Activated CD4-positive, alpha-beta T cell treated with anti-CD3 and anti-CD28 coated beads for 36 hours (primary cell): ENCODE measurements at regions of chr3 and their contacts with region 1.

Region 1: GRCh38 chr3:38496131-38496910 is at the start of gene EXOG:
- DNase-seq: peak; percentile 98
- ATAC-seq: peak; percentile 88
- H3K4me3 Mint-ChIP-seq: peak within 1 kb of the TSS; percentile 86
- H3K27ac Mint-ChIP-seq: peak within 1 kb of the TSS; percentile 92
- H3K4me1 Mint-ChIP-seq: peaks cover 18% of the 10 kb centered on the region
- H3K27me3 Mint-ChIP-seq: no peaks in the 10 kb centered on the region
- total RNA-seq, gene EXOG: 13.0 to 14.9 TPM

Region 2: DNA sequence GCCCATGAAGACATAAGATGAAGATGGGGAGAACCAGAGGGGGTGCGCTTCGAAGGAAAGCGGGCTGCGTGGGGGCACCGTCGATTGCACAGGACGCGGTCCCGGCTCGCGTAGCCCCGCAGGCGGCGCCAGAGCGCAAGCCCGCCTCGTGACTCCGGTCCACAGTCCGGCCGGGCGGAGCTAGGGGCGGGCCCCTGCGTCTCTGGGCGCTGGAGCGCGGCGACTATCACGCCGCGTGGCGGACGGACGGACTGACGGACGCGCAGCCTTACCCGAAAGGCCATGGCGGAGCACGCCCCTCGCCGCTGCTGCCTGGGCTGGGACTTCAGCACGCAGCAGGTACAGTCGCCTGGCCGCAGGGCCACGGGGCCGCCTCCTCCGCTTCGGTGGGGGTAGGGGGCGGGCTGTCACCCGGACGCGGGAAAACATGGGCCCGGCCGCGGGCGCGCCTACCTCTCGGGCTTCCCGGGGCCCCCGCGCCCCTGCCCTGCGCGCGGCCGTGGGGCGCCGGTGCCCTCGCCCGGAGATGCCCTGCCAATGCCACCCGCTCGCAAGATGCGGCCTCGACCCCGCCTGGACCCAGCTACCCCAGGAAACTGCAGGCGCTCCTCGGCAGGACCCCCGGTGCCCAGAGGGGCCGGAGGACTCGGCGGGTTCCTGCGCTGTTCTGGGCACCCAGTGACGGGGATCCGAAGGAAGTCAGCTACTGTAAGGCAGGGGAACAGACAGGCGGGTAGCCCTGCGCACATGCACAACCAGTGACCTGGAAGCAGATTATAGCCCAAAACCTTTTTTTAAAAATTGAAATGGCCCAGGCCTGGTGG is 149.5 kb before region 1 on chr3 and contains the start of gene XYLB:
- CTCF ChIA-PET with region 1: interaction called, 12 read pairs
- POLR2A ChIA-PET with region 1: no interaction called
- intact Hi-C with region 1: loop called in 1 of 2 experiments (anchors 1 kb)
- DNase-seq: peak; percentile 89
- ATAC-seq: peak; percentile 98
- H3K4me3 Mint-ChIP-seq: peak within 1 kb of the TSS; percentile 70
- H3K27ac Mint-ChIP-seq: no peak within 1 kb of the TSS
- H3K4me1 Mint-ChIP-seq: peaks cover 2% of the 10 kb centered on the region
- H3K27me3 Mint-ChIP-seq: peaks cover 2% of the 10 kb centered on the region
- total RNA-seq, gene XYLB: 5.0 to 5.3 TPM

Region 3: DNA sequence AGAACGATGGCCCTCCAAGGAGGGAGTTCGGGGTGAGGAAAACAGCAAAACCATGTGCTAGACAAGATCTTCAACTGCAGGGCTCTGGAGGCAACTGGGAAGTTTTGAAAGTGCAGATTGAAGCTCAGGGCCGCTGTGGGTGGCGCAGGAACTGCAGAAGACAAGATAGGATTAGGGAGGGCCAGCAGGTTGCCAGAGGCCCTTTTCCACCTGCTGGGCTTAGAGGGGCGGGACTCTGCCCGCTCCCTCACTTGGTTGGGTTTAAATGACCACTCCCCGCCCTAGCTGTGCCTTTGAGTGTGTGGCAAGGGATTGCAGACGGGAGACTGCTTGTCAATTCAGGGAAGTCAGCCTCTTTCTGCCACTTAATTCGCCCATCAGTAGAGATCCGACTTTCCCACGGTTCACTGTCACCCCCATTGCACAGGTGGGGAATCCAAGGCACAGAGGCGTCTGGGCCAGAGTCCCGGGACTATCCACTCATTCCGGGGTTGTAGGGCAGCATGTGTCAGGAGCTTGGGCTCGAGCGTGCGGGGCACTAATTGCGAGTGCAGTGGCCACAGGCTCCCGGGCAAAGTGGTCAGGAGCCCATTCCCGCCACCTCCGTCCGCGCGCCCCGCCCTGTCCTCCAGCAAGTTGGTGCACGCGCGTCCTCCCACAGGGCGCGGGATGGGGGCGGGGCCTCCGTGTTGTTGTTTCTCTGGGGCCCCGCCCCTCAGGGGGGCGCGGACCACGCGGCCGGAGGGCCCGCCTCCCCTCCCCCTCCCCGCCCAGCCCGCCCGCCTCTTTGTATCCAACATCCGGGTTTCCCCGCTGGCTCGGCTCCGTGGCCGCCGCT is 43.0 kb before region 1 on chr3 and contains the start of gene ACVR2B:
- CTCF ChIA-PET with region 1: interaction called, 5 read pairs
- POLR2A ChIA-PET with region 1: no interaction called
- intact Hi-C with region 1: loop called (anchors 1 kb)
- DNase-seq: peak; percentile 85
- ATAC-seq: peak; percentile 71
- H3K4me3 Mint-ChIP-seq: peak within 1 kb of the TSS; percentile 87
- H3K27ac Mint-ChIP-seq: peak within 1 kb of the TSS; percentile 81
- H3K4me1 Mint-ChIP-seq: peaks cover 9% of the 10 kb centered on the region
- H3K27me3 Mint-ChIP-seq: peaks cover 2% of the 10 kb centered on the region
- total RNA-seq, gene ACVR2B: 5.7 to 6.9 TPM

Region 4: DNA sequence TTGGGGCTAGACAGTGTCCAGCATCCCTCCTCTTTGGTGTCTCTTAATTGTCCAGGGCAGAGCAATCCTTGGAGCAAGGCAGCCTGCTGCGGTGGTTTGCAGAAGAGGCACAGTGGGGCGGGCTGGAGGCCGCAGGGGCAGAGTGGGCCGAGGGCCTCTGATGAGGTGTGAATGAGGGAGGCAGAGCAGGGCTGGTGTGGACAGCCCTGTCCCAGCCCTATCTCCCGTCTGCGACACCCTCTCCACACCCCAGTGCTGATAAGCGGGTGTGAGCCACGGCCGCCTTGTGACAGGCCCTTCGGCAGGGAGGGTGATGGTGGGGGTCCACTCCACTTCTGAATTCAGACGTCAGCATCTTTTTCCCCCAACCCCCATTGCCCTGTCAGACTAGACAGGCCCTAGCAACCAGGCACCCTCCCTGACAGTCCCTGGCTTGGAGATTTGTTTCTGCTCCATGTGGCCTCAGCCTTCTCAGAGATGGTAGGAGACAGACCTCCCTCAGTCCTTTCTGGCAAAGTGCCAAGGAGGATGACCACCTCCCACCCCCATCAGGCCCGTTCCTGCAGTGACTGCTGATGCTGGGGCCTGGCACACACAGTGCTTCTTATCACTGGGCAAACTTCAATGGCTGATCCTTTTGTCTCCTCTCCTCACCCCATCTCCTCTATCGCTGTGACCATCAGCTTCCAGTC is 37.1 kb after region 1 on chr3:
- CTCF ChIA-PET with region 1: no interaction called
- POLR2A ChIA-PET with region 1: no interaction called
- intact Hi-C with region 1: no loop called
- DNase-seq: no peak
- ATAC-seq: no peak
- H3K4me3 Mint-ChIP-seq: no peak overlapping the region
- H3K27ac Mint-ChIP-seq: no peak overlapping the region
- H3K4me1 Mint-ChIP-seq: peaks cover 4% of the 10 kb centered on the region
- H3K27me3 Mint-ChIP-seq: no peaks in the 10 kb centered on the region

Region 5: DNA sequence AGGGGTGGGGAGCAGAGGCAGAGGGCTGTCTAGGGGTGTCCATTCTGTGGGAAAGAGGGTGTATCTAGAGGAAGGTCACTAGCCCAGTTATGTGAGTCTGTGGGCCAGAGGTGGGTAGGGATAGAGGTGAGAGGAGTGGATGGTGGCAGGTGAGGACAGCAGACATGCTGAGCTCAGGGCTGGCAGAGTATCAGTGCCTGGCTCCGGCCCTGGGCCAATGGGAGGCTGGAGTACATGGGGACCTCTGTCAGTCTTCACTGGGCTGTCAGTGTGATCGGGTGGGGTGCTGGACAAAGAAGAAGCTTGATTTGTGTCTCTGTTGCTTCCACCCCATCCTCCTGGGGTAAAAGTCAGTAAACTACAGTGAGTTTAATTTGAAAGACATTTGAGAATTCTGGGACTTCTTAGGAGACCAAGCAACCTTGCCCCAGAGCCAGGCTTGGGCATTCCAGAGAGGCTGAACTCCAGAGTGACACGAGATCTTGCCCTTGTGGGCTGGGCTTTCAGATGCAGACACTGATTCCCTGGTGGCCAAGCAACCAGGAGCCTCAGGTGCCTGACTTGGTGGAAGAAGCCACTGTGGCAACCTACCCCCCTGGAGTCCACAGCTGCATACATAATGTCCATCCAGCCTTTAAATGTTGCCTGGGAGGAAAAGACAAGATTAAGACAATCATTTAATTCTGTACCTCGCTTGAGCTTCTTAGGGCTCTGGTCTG is 60.5 kb after region 1 on chr3:
- CTCF ChIA-PET with region 1: no interaction called
- POLR2A ChIA-PET with region 1: no interaction called
- intact Hi-C with region 1: no loop called
- DNase-seq: no peak
- ATAC-seq: no peak
- H3K4me3 Mint-ChIP-seq: no peak overlapping the region
- H3K27ac Mint-ChIP-seq: no peak overlapping the region
- H3K4me1 Mint-ChIP-seq: no peaks in the 10 kb centered on the region
- H3K27me3 Mint-ChIP-seq: peaks cover 3% of the 10 kb centered on the region

Region 6: DNA sequence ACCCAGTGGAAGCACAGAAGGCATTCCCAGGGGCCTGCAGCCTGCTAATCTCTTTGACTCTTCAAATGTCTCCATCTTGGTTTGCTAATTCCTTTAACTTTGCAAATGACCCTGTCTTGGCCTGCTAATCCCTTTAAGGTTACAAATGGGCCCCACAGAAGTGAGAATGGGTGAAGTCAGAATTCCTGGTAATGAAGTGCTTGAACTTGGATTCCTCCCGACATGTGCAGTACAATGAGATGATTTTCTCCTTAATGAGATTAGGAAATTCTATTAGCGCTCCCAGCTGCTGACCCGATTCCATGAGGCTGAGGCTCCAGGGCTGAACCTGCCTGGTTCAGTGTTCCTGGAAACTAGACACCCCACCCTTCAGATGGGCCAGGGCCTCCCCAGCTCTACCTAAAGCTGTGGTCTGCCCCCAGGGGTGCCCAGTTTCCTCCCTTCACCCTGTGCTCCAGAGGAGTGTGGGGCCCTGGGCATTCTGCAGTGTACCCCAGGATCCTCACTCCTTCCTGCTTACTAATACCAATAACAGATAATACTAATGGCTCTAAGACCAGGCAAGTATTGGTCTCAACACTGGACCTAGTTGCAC is 105.7 kb after region 1 on chr3:
- CTCF ChIA-PET with region 1: no interaction called
- POLR2A ChIA-PET with region 1: no interaction called
- intact Hi-C with region 1: no loop called
- DNase-seq: no peak
- ATAC-seq: no peak
- H3K4me3 Mint-ChIP-seq: no peak overlapping the region
- H3K27ac Mint-ChIP-seq: no peak overlapping the region
- H3K4me1 Mint-ChIP-seq: no peaks in the 10 kb centered on the region
- H3K27me3 Mint-ChIP-seq: peaks cover 9% of the 10 kb centered on the region

Region 7: GRCh38 chr3:39000008-39000450 is 503.7 kb after region 1 on chr3:
- CTCF ChIA-PET with region 1: interaction called, 4 read pairs
- POLR2A ChIA-PET with region 1: no interaction called
- intact Hi-C with region 1: loop called in 1 of 2 experiments (anchors 5 kb)
- DNase-seq: no peak
- ATAC-seq: peak; percentile 71
- H3K4me3 Mint-ChIP-seq: no peak overlapping the region
- H3K27ac Mint-ChIP-seq: no peak overlapping the region
- H3K4me1 Mint-ChIP-seq: no peaks in the 10 kb centered on the region
- H3K27me3 Mint-ChIP-seq: no peaks in the 10 kb centered on the region

Region 8: GRCh38 chr3:39180546-39181346 is 684.4 kb after region 1 on chr3:
- CTCF ChIA-PET with region 1: no interaction called
- POLR2A ChIA-PET with region 1: no interaction called
- intact Hi-C with region 1: loop called in 1 of 2 experiments (anchors 5 kb)
- DNase-seq: peak; percentile 94
- ATAC-seq: peak; percentile 77
- H3K4me3 Mint-ChIP-seq: peak overlapping the region; percentile 77
- H3K27ac Mint-ChIP-seq: peak overlapping the region; percentile 82
- H3K4me1 Mint-ChIP-seq: peaks cover 48% of the 10 kb centered on the region
- H3K27me3 Mint-ChIP-seq: no peaks in the 10 kb centered on the region

Region 9: DNA sequence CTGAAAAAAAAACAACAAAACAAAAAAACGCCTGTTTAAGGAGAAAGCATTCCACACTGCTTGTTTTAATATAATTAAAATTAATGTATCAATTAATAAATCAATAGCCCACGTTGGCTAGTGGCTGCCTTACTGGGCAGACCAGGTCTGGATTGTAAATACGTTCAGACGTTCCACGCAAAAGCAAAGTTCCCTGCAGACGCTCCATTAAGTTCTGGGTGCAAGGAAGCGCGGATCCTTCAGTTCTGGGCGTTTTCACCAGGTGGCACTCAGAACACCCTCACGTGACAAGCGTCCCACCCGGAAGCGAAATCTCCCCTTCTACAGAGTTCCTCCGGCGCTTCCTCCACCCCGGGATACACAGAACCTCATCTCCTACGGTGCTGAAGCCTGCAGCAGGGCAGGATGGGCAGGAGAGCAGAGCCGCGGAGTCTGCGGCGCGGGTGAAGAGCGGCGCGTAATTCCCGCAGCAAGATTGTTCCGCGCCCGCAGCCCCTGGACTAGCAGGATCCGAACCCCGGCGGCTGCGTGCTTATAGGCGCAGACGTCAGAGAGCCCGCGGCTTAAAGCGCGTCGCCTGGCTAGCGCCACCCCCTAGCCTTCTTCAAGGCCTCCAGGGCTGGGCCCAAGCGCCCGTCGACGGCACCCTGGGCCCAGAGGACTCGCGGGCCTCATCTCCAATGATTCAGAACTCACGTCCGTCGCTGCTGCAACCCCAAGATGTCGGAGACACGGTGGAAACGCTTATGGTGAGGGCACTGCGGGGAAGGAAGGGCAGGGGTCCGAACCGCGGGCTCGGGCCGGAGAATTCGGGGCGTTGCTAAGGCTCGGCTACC is 886.9 kb after region 1 on chr3 and contains the start of gene SLC25A38:
- CTCF ChIA-PET with region 1: no interaction called
- POLR2A ChIA-PET with region 1: no interaction called
- intact Hi-C with region 1: loop called in 1 of 2 experiments (anchors 5 kb)
- DNase-seq: peak; percentile 91
- ATAC-seq: peak; percentile 88
- H3K4me3 Mint-ChIP-seq: peak within 1 kb of the TSS; percentile 97
- H3K27ac Mint-ChIP-seq: peak within 1 kb of the TSS; percentile 97
- H3K4me1 Mint-ChIP-seq: peaks cover 43% of the 10 kb centered on the region
- H3K27me3 Mint-ChIP-seq: no peaks in the 10 kb centered on the region
- total RNA-seq, gene SLC25A38: 23.0 to 24.8 TPM